Sigmoid colon (tissue), 7 donors: ENCODE measurements at regions of chr21 and their contacts with region 1.

Region 1: GRCh38 chr21:45973659-45974072 is 7.9 kb upstream of the COL6A1 start:
- DNase-seq: peak; percentile 96
- H3K4me3 ChIP-seq: peak overlapping the region; percentile 39 to 59 (median 47)
- H3K27ac ChIP-seq: peak overlapping the region; percentile 90 to 98 (median 98)
- H3K4me1 ChIP-seq: peaks cover 0 to 75% (median 73%) of the 10 kb centered on the region in 4 donors
- H3K27me3 ChIP-seq: no peaks in the 10 kb centered on the region
- CTCF ChIP-seq: peak in 3 of 4 experiments; percentile 65 to 72 (median 71)
- EP300 ChIP-seq: peak in 1 of 4 donors; percentile 10
- POLR2A ChIP-seq: peak in 1 of 2 donors; percentile 19

Region 2: GRCh38 chr21:46097336-46098293 is 123.9 kb after region 1 on chr21 and contains the start of gene COL6A2:
- intact Hi-C with region 1: loop called (anchors 1 kb)
- DNase-seq: peak; percentile 91
- H3K4me3 ChIP-seq: peak within 1 kb of the TSS; percentile 89 to 98 (median 92)
- H3K27ac ChIP-seq: peak within 1 kb of the TSS; percentile 98 to 100 (median 99)
- H3K4me1 ChIP-seq: peaks cover 0 to 69% (median 52%) of the 10 kb centered on the region in 4 donors
- H3K27me3 ChIP-seq: no peaks in the 10 kb centered on the region
- CTCF ChIP-seq: peak in 1 of 4 experiments; percentile 49
- EP300 ChIP-seq: no peak
- POLR2A ChIP-seq: peak; percentile 44 to 89
- total RNA-seq, gene COL6A2: 570 to 1,745 (median 1,082) TPM

Region 3: DNA sequence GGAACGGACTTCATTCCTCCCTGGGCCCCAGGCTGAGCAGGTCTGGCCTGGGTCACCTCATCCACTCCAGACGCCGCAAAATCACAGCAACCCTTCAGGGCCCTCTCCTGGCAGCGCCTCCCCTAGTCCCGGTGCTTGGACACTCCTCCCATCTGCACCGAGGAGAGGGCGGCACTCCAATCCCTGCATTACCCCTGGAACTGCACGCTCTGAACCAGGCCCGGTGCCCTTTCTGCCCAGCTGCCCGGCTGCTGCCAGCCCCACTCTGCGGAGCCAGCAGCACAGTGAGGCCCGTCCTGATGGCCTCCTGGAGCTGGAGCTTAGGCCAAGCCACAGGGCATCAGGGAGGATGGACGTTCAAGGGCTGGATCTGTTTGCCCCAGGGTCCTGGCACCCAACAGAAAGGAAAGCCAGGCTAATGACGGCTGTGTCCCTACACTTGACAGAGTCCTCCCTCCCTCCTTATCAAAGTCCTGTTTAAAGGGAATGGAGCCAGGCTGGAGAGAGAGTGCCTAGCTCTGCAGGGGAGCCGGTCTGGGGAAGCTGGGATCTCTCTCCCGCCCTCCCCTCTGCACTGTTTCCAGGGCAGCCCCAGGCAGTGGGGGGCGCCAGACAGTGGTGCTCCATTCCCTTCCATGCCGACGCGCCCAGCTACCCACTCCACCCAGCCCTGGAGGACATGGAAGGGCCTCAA is 137.0 kb after region 1 on chr21:
- intact Hi-C with region 1: loop called (anchors 1 kb)
- DNase-seq: peak; percentile 95
- H3K4me3 ChIP-seq: peak overlapping the region in 1 of 4 donors; percentile 13
- H3K27ac ChIP-seq: peak overlapping the region; percentile 73 to 81 (median 74)
- H3K4me1 ChIP-seq: peaks cover 0 to 41% (median 31%) of the 10 kb centered on the region in 4 donors
- H3K27me3 ChIP-seq: no peaks in the 10 kb centered on the region
- CTCF ChIP-seq: peak in 1 of 4 experiments; percentile 28
- EP300 ChIP-seq: no peak
- POLR2A ChIP-seq: no peak

Region 4: GRCh38 chr21:46228345-46229051 is 254.8 kb after region 1 on chr21 and contains the start of gene LSS:
- intact Hi-C with region 1: loop called (anchors 5 kb)
- DNase-seq: peak; percentile 99
- H3K4me3 ChIP-seq: peak within 1 kb of the TSS; percentile 74 to 100 (median 89)
- H3K27ac ChIP-seq: peak within 1 kb of the TSS; percentile 82 to 90 (median 90)
- H3K4me1 ChIP-seq: peaks cover 0 to 41% (median 33%) of the 10 kb centered on the region in 4 donors
- H3K27me3 ChIP-seq: no peaks in the 10 kb centered on the region
- CTCF ChIP-seq: no peak
- EP300 ChIP-seq: peak in 1 of 4 donors; percentile 53
- POLR2A ChIP-seq: peak in 1 of 2 donors; percentile 57
- total RNA-seq, gene LSS: 47.6 to 63.7 (median 57.0) TPM

Region 5: DNA sequence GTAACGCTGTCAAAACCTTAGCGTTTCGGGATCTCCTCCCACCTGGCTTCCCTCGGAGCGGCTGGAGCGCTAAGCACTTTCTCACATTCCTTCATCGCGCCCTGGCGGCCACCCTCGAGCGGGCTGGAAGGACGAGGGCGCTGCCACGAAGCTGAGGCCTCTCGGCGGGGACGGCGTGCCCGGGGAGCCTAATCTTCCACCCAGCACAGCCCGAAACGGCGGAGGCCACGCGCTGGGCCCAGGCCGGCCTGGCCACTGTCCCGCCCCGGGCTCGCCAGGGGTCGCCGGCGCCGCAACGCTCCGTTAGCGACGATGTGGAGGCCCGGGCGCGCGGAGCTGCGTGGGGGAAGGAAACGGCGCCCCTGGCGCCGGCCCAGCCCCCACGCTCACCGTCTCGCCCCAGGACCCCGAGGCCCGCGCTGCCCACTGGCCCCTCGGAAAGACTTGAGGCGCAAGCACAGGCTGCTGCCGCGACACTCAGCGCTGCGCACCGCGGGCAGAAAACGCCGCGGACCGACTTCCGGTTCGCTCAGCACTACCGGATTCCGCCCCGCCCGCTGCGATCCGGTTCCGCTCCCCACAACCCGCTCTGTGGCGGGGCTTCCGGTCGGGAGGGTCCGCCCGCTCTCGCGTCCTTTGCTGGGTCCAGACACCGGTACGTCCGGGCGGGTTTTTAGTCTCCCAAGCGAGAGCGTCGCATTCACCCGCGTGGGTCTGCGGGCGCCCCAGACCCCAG is 312.3 kb after region 1 on chr21 and contains the start of gene YBEY:
- intact Hi-C with region 1: loop called (anchors 2 kb)
- DNase-seq: peak; percentile 94
- H3K4me3 ChIP-seq: peak within 1 kb of the TSS; percentile 83 to 95 (median 90)
- H3K27ac ChIP-seq: peak within 1 kb of the TSS; percentile 96 to 99 (median 97)
- H3K4me1 ChIP-seq: peaks cover 0 to 60% (median 51%) of the 10 kb centered on the region in 4 donors
- H3K27me3 ChIP-seq: no peaks in the 10 kb centered on the region
- CTCF ChIP-seq: peak; percentile 12 to 59 (median 36)
- EP300 ChIP-seq: no peak
- POLR2A ChIP-seq: peak; percentile 49 to 71
- total RNA-seq, gene YBEY: 9.0 to 15.1 (median 13.2) TPM

Region 6: GRCh38 chr21:46323227-46324128 is 349.8 kb after region 1 on chr21 and contains the start of gene C21orf58:
- intact Hi-C with region 1: loop called (anchors 2 kb)
- DNase-seq: peak; percentile 99
- H3K4me3 ChIP-seq: peak within 1 kb of the TSS; percentile 87 to 99 (median 94)
- H3K27ac ChIP-seq: peak within 1 kb of the TSS; percentile 94 to 99 (median 98)
- H3K4me1 ChIP-seq: peaks cover 0 to 34% (median 27%) of the 10 kb centered on the region in 4 donors
- H3K27me3 ChIP-seq: no peaks in the 10 kb centered on the region
- CTCF ChIP-seq: no peak
- EP300 ChIP-seq: no peak
- POLR2A ChIP-seq: no peak
- total RNA-seq, gene C21orf58: 1.4 to 4.7 (median 1.9) TPM